Esophagus muscularis mucosa (tissue), 4 donors: ENCODE measurements at regions of chr2 and their contacts with region 1.

Region 1: GRCh38 chr2:236180831-236181453 is 12.8 kb upstream of the GBX2 start:
- DNase-seq: no peak
- H3K4me3 ChIP-seq: no peak overlapping the region
- H3K27ac ChIP-seq: no peak overlapping the region
- H3K4me1 ChIP-seq: peaks cover 18 to 28% (median 27%) of the 10 kb centered on the region in 4 donors
- H3K27me3 ChIP-seq: peaks cover 7 to 81% (median 53%) of the 10 kb centered on the region in 4 donors
- CTCF ChIP-seq: peak; percentile 55 to 67 (median 61)
- EP300 ChIP-seq: no peak
- POLR2A ChIP-seq: no peak

Region 2: GRCh38 chr2:235766278-235766677 is 414.7 kb before region 1 on chr2:
- intact Hi-C with region 1: loop called (anchors 2 kb)
- DNase-seq: peak; percentile 94
- H3K4me3 ChIP-seq: no peak overlapping the region
- H3K27ac ChIP-seq: peak overlapping the region in 2 of 4 donors; percentile 4 to 57
- H3K4me1 ChIP-seq: peaks cover 5 to 20% (median 14%) of the 10 kb centered on the region in 4 donors
- H3K27me3 ChIP-seq: no peaks in the 10 kb centered on the region
- CTCF ChIP-seq: peak; percentile 95
- EP300 ChIP-seq: no peak
- POLR2A ChIP-seq: no peak

Region 3: GRCh38 chr2:235780401-235780800 is 400.5 kb before region 1 on chr2:
- intact Hi-C with region 1: loop called (anchors 5 kb)
- DNase-seq: no peak
- H3K4me3 ChIP-seq: no peak overlapping the region
- H3K27ac ChIP-seq: no peak overlapping the region
- H3K4me1 ChIP-seq: peaks cover 0 to 7% (median 0%) of the 10 kb centered on the region in 4 donors
- H3K27me3 ChIP-seq: no peaks in the 10 kb centered on the region
- CTCF ChIP-seq: no peak
- EP300 ChIP-seq: no peak
- POLR2A ChIP-seq: no peak